Activated T-helper 2 cell treated with anti-CD3 and anti-CD28 coated beads, Interferon-gamma antibody, Interleukin-2, Interleukin-4, amounts not matched to agents 10 μg/mL and 5 μg/mL and 100 μg/mL, durations not matched to agents 14 hours and 24 hours and 36 hours (primary cell): ENCODE measurements at regions of chr9 and their contacts with region 1.

Region 1: DNA sequence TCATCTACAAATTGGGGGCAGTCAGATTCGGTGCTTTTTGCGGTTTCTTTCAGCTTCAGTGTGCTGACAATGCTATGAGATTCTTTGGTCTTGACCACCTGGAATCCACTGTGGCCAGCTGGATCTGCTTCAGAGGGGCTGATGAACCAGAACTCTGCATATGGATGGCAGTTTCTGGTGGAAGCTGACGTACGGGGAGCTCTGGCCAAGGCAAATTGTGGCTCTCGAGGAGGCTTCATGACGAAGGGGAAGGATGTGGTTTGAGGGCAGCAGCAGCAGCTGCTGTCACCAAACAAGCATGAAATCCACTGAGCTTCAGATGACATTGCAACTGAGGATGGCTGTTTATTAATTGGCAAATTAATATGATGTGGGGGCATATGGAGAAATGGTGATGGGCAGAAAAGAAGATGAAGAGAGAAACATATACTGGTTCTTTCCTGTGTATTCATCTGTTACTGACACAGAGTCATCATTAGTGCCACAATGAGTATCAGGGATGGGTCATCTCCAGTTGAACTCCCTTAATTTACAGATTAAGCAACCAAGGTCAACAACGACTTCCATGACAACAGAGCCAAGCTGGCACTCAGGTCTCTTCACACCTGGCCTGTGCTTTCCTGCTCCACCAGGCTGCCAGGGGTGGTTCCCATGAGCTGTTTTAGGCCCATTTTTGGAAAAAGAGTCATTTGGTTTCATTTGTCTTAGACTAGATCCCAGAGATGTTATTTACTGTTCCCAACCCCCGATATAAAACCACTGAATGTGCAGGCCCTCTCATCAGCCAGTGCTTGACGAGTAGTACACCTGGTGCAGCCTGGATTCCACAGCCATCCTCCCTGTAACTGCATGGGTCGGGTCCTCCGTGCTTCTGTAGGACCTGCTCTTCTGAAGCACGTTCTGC is 134.7 kb downstream of the AOPEP start:
- DNase-seq: peak; percentile 67
- H3K4me3 Mint-ChIP-seq: peak overlapping the region; percentile 15
- H3K27ac Mint-ChIP-seq: peak overlapping the region; percentile 43
- H3K4me1 Mint-ChIP-seq: peaks cover 39% of the 10 kb centered on the region
- H3K27me3 Mint-ChIP-seq: peaks cover 35% of the 10 kb centered on the region

Region 2: GRCh38 chr9:94839398-94839797 is 21.8 kb before region 1 on chr9:
- intact Hi-C with region 1: loop called (anchors 1 kb)
- DNase-seq: no peak
- H3K4me3 Mint-ChIP-seq: no peak overlapping the region
- H3K27ac Mint-ChIP-seq: no peak overlapping the region
- H3K4me1 Mint-ChIP-seq: peaks cover 23% of the 10 kb centered on the region
- H3K27me3 Mint-ChIP-seq: no peaks in the 10 kb centered on the region

Region 3: DNA sequence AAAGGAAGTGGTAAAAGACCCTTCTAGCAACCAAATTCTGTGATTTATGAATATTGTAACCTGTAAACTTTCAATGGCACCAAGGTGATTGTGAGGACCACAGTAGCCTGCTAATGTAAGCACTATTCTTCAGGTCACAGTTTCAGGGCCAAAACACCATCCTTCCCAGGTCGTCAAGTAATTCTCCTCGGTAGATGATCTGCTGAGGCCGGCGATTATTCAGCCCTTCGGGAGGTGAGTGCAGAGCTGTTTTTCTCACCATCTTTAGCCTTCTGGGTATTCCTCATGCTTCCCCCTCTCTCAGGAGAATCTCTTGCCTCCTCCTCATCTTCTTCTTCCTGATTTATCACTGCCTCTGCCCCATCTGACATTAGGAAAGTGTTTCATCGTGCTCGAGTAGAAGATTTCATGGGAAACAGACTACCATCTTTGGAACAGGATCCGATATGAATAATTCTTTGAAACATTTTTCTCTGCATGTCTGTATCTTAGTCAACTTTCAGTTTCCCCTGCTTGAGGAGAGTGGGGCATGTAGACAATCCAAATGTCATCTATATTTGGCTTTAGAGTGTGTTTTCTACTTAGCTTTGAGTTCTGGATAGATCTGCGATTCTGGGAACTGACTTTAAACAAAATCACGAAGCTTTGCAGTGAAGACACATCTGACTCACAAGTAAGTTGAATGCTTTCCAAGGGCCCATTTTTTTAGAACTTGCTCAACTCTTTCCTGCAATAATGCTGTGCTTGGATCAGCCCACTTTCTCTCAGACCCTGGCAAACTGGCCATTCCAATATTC is 39.2 kb after region 1 on chr9:
- intact Hi-C with region 1: loop called (anchors 5 kb)
- DNase-seq: no peak
- H3K4me3 Mint-ChIP-seq: no peak overlapping the region
- H3K27ac Mint-ChIP-seq: peak overlapping the region; percentile 55
- H3K4me1 Mint-ChIP-seq: peaks cover 26% of the 10 kb centered on the region
- H3K27me3 Mint-ChIP-seq: peaks cover 9% of the 10 kb centered on the region